Astrocyte of the cerebellum (primary cell): ENCODE measurements at regions of chr16 and their contacts with region 1.

Region 1: DNA sequence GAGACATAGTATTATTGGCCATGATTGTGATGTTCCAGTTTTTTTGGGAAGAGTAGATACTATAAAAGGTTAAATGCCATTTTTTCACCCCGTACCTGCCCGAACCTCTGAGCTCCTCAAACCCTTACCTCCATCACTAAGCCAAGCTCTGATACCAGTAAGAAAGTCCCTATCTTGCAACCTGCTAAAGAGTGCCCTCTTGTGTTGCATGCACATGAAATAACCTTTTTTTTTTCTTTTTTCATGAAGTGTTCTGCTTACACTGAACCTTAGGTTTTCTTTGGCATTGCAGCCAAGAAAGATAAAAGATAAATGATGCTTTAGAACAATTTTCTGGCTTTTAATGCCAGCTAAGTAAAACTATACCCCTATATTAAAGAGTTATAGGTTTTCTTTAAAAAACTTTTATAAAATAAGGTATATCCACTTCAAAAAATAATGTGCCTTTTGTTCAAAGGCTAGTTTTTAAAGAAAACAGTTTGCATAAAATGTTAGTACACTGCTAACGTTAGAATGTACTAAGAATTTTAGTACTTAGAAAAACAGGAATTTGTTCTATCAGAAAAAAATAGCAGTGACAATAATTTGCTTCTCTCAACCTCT is 295.3 kb upstream of the PMFBP1 start:
- DNase-seq: peak; percentile 45
- H3K4me3 ChIP-seq: no peak overlapping the region
- CTCF ChIP-seq: peak; percentile 70

Region 2: GRCh38 chr16:72241930-72242329 is 225.3 kb before region 1 on chr16:
- in situ Hi-C with region 1: loop called (anchors 10 kb)
- DNase-seq: peak; percentile 31
- H3K4me3 ChIP-seq: no peak overlapping the region
- CTCF ChIP-seq: peak; percentile 95

Region 3: GRCh38 chr16:72646615-72647014 is 179.4 kb after region 1 on chr16:
- in situ Hi-C with region 1: no loop called
- DNase-seq: no peak
- H3K4me3 ChIP-seq: no peak overlapping the region
- CTCF ChIP-seq: no peak